ENCODE measurements at regions of chr21 and their contacts with region 1.

Region 1: GRCh38 chr21:23162198-23162946 is 2164.2 kb downstream of the NCAM2 start:
- DNase-seq: no peak
- H3K4me3 ChIP-seq: no peak overlapping the region
- H3K27ac ChIP-seq: no peak overlapping the region
- H3K4me1 ChIP-seq: no peaks in the 10 kb centered on the region
- H3K27me3 ChIP-seq: no peaks in the 10 kb centered on the region
- CTCF ChIP-seq: no peak

Region 2: GRCh38 chr21:23039846-23040245 is 122.5 kb before region 1 on chr21:
- CTCF ChIA-PET with region 1: no interaction called
- POLR2A ChIA-PET with region 1: no interaction called
- intact Hi-C with region 1: loop called (anchors 10 kb)
- DNase-seq: no peak
- H3K4me3 ChIP-seq: no peak overlapping the region
- H3K27ac ChIP-seq: no peak overlapping the region
- H3K4me1 ChIP-seq: no peaks in the 10 kb centered on the region
- H3K27me3 ChIP-seq: no peaks in the 10 kb centered on the region
- CTCF ChIP-seq: no peak

Region 3: GRCh38 chr21:23067672-23068071 is 94.7 kb before region 1 on chr21:
- CTCF ChIA-PET with region 1: no interaction called
- POLR2A ChIA-PET with region 1: no interaction called
- intact Hi-C with region 1: no loop called
- DNase-seq: no peak
- H3K4me3 ChIP-seq: no peak overlapping the region
- H3K27ac ChIP-seq: no peak overlapping the region
- H3K4me1 ChIP-seq: no peaks in the 10 kb centered on the region
- H3K27me3 ChIP-seq: no peaks in the 10 kb centered on the region
- CTCF ChIP-seq: no peak

Region 4: GRCh38 chr21:23083242-23083641 is 79.1 kb before region 1 on chr21:
- CTCF ChIA-PET with region 1: no interaction called
- POLR2A ChIA-PET with region 1: no interaction called
- intact Hi-C with region 1: no loop called
- DNase-seq: no peak
- H3K4me3 ChIP-seq: no peak overlapping the region
- H3K27ac ChIP-seq: no peak overlapping the region
- H3K4me1 ChIP-seq: no peaks in the 10 kb centered on the region
- H3K27me3 ChIP-seq: no peaks in the 10 kb centered on the region
- CTCF ChIP-seq: no peak

Region 5: DNA sequence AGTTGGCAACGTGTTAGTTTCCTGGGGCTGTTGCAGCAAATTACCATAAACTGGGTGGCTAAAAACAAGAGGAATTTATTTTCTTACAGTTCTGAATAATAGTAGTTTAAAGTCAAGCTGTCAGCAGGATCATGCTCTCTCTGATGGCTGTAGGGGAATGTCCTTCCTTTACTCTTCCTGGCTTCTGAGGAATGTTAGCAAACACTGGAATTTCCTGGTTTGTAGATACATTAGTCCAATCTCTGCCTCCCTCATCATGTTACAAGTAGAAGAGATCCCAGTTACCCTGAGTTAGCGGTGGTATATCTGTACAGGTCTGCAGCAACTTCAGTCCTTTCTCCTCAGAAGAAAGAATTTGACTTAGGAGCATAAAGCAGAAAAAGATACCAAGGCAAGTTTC is 85.0 kb after region 1 on chr21:
- CTCF ChIA-PET with region 1: no interaction called
- POLR2A ChIA-PET with region 1: no interaction called
- intact Hi-C with region 1: no loop called
- DNase-seq: peak; percentile 37
- H3K4me3 ChIP-seq: no peak overlapping the region
- H3K27ac ChIP-seq: peak overlapping the region; percentile 48
- H3K4me1 ChIP-seq: peaks cover 15% of the 10 kb centered on the region
- H3K27me3 ChIP-seq: no peaks in the 10 kb centered on the region
- CTCF ChIP-seq: no peak

Measured in A673 (cell line).